Right ventricle myocardium superior (tissue), 1 donor: ENCODE measurements at regions of chr1 and their contacts with region 1.

Region 1: DNA sequence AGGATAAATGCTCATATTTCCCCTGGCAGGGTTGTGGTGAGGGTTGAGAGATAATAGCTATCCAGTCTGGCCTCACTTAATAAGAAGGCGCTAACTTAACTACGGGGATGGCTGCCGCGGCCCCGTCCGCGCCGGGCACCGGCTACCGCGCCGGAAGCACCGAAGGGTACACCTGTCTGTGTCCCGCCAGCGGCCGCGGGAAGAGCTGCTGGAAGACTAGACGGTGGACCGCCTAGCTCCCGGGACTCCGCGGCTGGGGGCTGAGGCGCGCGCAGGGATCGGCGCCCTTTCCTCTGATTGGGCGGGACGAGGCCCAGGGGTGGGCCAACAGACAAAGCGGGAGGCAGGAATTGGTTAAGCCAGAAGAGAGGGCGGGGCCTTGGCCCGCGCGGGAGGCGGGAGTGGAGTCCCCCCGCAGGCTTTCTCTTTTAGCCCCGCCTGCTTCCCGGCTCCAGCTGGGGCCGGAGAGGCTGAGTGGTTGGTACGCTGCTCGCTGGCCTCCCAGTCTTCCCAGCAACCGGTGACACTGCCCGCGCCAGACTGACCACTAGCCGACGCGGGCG is at the start of gene ZNF672:
- DNase-seq: peak; percentile 99
- ATAC-seq: peak; percentile 93
- total RNA-seq, gene ZNF672: 41.7 TPM

Region 2: GRCh38 chr1:248779350-248779749 is 58.5 kb before region 1 on chr1:
- intact Hi-C with region 1: no loop called
- DNase-seq: no peak
- ATAC-seq: no peak

Region 3: GRCh38 chr1:248807067-248807737 is 30.7 kb before region 1 on chr1:
- intact Hi-C with region 1: no loop called
- DNase-seq: peak; percentile 71
- ATAC-seq: peak; percentile 80

Region 4: GRCh38 chr1:248858891-248859889 is 21.3 kb after region 1 on chr1 and contains the start of gene ZNF692:
- intact Hi-C with region 1: loop called (anchors 2 kb)
- DNase-seq: peak; percentile 99
- ATAC-seq: peak; percentile 92
- total RNA-seq, gene ZNF692: 20.4 TPM